Aorta (tissue), 5 donors: ENCODE measurements at regions of chr6 and their contacts with region 1.

Region 1: DNA sequence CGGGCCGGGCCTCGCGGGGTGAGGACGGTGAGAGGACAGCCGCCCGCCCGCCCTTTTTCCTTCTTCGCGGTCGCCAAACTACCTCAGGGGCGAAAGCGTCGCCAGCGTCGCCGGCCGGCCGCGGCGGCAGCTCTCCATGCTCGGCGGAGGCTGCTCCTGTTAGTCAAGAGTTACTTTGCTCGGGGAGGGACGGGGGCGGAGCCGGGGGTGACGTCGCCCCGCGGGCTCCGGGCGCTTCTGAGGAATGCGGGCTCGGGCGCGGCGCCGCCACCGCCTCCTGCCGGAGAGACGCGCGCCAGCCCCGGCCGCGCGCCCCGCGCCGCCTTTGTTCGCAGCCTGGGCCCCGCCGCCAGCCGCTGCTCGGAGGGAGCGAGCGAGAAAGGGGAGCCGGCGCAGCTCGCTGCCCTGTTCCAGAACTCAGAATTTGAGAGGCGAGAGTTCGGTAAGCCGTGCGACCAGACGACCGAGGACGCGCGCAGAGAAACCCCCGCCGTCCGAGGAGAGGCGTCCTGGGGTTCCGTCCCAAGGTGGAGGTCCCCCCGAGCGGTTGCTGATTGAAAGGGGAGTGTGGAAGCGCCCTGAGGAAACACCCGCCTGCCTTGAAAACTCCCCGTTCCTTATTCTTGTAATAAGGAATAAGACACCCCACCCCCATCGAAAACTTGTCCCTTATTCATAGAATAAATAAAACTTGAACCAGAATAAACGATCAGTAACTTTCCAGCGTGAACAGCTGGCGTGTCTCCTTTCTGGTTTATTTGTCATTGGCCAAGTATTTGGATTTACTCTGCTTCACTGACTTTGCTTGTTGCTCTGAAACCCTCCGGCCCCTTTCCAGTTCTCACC is at the start of gene PTPRK:
- DNase-seq: peak; percentile 93 to 98
- ATAC-seq: peak; percentile 96
- H3K4me3 ChIP-seq: peak within 1 kb of the TSS; percentile 78 to 88
- H3K27ac ChIP-seq: peak within 1 kb of the TSS; percentile 84 to 91
- H3K4me1 ChIP-seq: peaks cover 0 to under 1% of the 10 kb centered on the region in 2 donors
- H3K27me3 ChIP-seq: no peaks in the 10 kb centered on the region
- total RNA-seq, gene PTPRK: 39.6 to 50.6 TPM

Region 2: GRCh38 chr6:127855542-127856159 is 665.0 kb before region 1 on chr6:
- intact Hi-C with region 1: loop called in 1 of 2 experiments (anchors 10 kb)
- DNase-seq: no peak
- ATAC-seq: no peak
- H3K4me3 ChIP-seq: no peak overlapping the region
- H3K27ac ChIP-seq: no peak overlapping the region
- H3K4me1 ChIP-seq: no peaks in the 10 kb centered on the region
- H3K27me3 ChIP-seq: no peaks in the 10 kb centered on the region

Region 3: DNA sequence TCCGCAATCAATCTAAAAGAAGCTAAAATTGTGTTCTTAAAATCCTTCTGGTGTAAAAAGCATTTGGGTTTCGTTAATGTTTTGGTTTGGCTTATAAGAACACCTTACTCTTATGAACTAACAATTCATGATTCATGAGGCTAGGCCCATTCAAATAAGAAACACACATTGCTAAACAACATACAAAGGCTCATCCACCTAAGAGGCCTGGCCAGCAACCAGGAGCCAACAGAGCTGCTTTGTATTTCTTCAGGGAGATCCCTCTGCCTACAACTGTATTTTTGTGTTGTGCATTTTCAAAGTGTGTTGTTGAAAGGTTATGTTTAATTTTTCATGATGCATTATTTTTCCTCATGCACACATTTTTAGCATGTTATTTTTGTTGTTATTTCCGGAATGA is 98.9 kb before region 1 on chr6:
- intact Hi-C with region 1: loop called (anchors 5 kb)
- DNase-seq: no peak
- ATAC-seq: no peak
- H3K4me3 ChIP-seq: no peak overlapping the region
- H3K27ac ChIP-seq: no peak overlapping the region
- H3K4me1 ChIP-seq: peaks cover 0 to 5% of the 10 kb centered on the region in 2 donors
- H3K27me3 ChIP-seq: no peaks in the 10 kb centered on the region

Region 4: DNA sequence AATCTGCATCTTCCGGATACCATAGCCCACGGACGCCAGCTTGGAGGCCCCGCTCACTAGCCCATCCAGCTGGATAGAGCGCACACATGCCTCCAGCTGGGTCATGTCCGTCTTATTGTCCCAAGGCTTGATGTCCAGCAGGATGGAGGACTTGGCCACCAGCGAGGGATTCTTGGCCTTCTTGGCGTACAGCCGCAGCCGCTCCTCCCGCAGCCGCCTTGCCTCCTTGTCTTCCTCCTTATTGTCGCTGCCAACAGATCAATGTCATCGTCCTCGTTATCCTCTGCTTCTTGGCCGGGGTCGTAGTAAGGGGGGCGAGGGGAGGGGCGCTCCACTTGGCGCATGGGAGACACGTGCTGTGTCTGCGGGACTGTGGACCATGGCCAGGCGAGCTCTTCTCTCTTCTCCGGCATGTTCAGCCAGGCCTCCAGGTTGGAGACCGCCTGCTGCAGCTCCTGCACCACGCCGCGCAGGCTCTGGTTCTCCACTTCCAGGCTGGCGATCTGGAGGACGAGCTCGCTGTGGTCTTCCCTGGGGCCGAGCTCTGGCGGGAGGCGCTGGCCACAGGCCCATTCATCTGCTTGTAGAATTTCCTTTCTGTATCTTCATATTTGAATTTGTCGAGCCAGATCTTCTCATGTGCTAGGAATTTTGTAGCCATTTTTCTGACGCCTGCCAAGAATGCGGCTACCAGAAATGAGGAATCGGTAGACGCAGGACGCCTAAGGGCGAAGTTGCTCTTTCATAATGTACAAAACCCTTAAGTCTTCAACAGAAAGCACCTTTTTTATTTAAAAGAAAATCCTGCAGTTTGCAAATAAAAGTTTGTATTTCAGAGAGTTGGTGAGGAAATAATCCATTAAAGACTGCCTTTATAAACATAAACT is 59.8 kb after region 1 on chr6:
- intact Hi-C with region 1: no loop called
- DNase-seq: no peak
- ATAC-seq: no peak
- H3K4me3 ChIP-seq: no peak overlapping the region
- H3K27ac ChIP-seq: no peak overlapping the region
- H3K4me1 ChIP-seq: no peaks in the 10 kb centered on the region
- H3K27me3 ChIP-seq: no peaks in the 10 kb centered on the region